ENCODE measurements at regions of chr17 and their contacts with region 1.

Region 1: DNA sequence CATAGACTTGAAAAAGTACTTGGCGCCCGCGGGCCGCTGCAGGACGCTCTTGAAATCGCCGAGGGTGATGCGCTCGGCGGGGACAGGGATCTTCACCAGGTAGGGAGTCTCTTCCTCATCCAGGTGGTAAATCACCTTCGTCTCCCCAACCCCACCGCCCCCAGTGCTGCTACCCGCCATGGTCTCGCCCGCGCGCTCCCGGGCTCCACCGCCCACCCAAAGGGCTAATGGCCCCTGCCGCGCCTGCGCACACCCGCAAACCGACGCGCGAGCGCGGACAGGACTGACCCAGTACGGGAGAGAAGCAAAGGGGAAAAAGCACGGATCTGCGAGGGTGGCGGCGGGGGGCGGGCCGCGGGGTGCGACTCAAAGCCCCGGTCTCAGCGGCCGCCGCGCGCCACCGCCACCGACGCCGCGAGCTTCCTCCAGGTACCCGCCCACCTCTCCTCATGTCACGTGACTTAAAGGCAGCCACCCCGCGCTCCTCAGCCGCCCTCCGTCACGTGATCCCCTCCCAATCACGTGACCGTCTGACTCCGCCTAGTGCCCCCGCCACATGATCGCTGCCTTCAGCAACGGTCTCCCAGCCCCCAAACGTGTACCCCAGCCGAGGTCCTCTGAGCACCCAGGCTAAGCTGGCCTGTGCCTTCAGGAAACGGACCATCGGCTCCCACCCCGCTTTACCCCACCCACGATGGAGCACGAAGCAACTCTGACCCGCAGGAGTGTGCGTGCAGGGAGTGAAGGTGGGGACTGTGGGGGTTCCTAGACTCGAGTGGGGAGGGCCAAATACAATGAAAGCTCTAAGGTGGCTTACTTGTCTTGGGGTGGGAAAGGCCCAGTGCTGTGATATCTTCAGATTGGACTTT is at the start of gene DVL2:
- DNase-seq: peak; percentile 97
- H3K4me3 ChIP-seq: peak within 1 kb of the TSS; percentile 86 to 89
- H3K27ac ChIP-seq: peak within 1 kb of the TSS; percentile 82 to 94
- H3K4me1 ChIP-seq: peaks cover 31 to 34% of the 10 kb centered on the region in 2 experiments
- H3K27me3 ChIP-seq: no peaks in the 10 kb centered on the region
- CTCF ChIP-seq: no peak
- EP300 ChIP-seq: peak in 1 of 2 experiments; percentile 41; a peak in 1 of 4 replicates
- RAD21 ChIP-seq: no peak
- polyA plus RNA-seq, gene DVL2: 6.9 and 8.3 TPM in 2 replicates

Region 2: GRCh38 chr17:7214300-7215135 is 19.8 kb before region 1 on chr17:
- CTCF ChIA-PET with region 1: interaction called, 44 read pairs
- POLR2A ChIA-PET with region 1: interaction called, 11 read pairs
- DNase-seq: peak; percentile 91
- H3K4me3 ChIP-seq: peak overlapping the region; percentile 56 to 64
- H3K27ac ChIP-seq: peak overlapping the region; percentile 88 to 96
- H3K4me1 ChIP-seq: peaks cover 26 to 54% of the 10 kb centered on the region in 2 experiments; a peak in 3 of 4 replicates
- H3K27me3 ChIP-seq: no peaks in the 10 kb centered on the region
- CTCF ChIP-seq: peak; percentile 64
- EP300 ChIP-seq: no peak; a peak in 1 of 4 replicates
- RAD21 ChIP-seq: peak; percentile 24; the same call in 1 of the 2 replicates

Region 3: GRCh38 chr17:7219812-7220581 is 14.3 kb before region 1 on chr17 and contains the starts of genes ACADVL and DLG4:
- CTCF ChIA-PET with region 1: interaction called, 44 read pairs
- POLR2A ChIA-PET with region 1: interaction called, 27 read pairs
- DNase-seq: peak; percentile 90
- H3K4me3 ChIP-seq: peak within 1 kb of the TSS; percentile 79 to 99
- H3K27ac ChIP-seq: peak within 1 kb of the TSS; percentile 76 to 89
- H3K4me1 ChIP-seq: peaks cover 20 to 54% of the 10 kb centered on the region in 2 experiments; a peak in 3 of 4 replicates
- H3K27me3 ChIP-seq: no peaks in the 10 kb centered on the region
- CTCF ChIP-seq: no peak
- EP300 ChIP-seq: no peak
- RAD21 ChIP-seq: no peak
- polyA plus RNA-seq, gene ACADVL: 635 and 796 TPM in 2 replicates
- polyA plus RNA-seq, gene DLG4: 22.1 and 30.5 TPM in 2 replicates

Region 4: DNA sequence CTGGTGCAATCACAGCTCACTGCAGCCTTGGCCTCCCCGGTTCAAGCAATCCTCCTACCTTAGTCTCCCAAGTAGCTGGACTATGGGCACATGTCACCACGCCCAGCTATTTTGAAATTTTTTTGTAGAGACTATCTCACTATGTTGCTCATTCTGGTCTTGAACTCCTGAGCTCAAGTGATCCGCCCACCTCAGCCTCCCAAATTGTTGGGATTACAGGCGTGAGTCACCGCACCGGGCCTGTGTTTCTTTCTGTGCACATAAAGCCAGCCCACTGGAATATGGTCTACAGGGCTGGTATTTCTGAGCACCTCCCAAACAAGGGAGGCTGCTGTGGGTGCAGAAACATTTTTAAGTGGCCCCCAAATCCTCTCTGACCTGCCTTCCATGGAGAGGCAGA is 129.0 kb after region 1 on chr17:
- CTCF ChIA-PET with region 1: no interaction called
- POLR2A ChIA-PET with region 1: no interaction called
- DNase-seq: no peak
- H3K4me3 ChIP-seq: no peak overlapping the region
- H3K27ac ChIP-seq: no peak overlapping the region
- H3K4me1 ChIP-seq: no peaks in the 10 kb centered on the region
- H3K27me3 ChIP-seq: no peaks in the 10 kb centered on the region
- CTCF ChIP-seq: no peak
- EP300 ChIP-seq: no peak
- RAD21 ChIP-seq: no peak